Transverse colon (tissue), 4 donors: ENCODE measurements at regions of chr18 and their contacts with region 1.

Region 1: DNA sequence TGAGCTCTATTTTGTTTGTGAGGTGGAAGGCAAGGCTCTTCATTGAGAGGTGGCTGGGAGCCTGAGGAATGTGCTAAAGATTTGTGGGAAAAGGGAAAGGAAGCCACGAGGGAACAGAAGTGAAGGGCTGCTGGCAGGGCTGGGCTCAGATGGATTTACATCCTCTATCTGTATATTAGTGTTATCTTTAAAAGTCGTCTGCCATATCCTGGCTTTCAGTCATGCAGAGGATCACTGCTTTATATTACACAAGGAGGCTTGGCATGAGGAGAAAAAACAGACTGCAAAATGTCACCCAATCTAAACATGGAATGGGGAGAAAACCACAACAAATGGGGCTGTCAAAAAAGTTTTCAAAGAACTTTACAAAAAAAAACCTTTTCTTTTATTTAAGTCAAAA is 434.4 kb downstream of the HRH4 start:
- DNase-seq: no peak
- H3K4me3 ChIP-seq: no peak overlapping the region
- H3K27ac ChIP-seq: no peak overlapping the region
- H3K4me1 ChIP-seq: peaks cover 0 to 5% (median 0%) of the 10 kb centered on the region in 4 donors
- H3K27me3 ChIP-seq: no peaks in the 10 kb centered on the region
- CTCF ChIP-seq: no peak
- EP300 ChIP-seq: no peak
- POLR2A ChIP-seq: no peak

Region 2: DNA sequence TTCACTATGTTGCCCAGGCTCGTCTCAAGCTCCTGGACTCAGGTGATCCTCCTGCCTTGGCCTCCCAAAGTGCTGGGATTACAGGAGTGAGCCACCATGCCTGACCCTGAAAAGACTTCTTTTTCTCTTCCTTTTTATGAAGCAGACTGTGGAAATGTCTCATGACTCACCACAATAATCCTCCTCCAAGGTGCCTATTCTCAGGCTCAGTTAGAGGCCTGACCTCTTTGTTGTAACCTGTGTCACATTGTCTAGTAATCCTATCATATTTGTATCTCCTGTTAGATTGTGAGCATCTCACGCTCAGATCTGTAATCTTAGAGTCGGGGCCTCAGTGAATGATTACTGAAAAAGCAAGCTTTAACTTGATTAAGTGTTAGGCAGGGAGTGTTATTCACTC is 1313.1 kb after region 1 on chr18:
- in situ Hi-C with region 1: no loop called
- intact Hi-C with region 1: loop called (anchors 5 kb)
- DNase-seq: no peak
- H3K4me3 ChIP-seq: no peak overlapping the region
- H3K27ac ChIP-seq: no peak overlapping the region
- H3K4me1 ChIP-seq: no peaks in the 10 kb centered on the region
- H3K27me3 ChIP-seq: no peaks in the 10 kb centered on the region
- CTCF ChIP-seq: no peak
- EP300 ChIP-seq: no peak
- POLR2A ChIP-seq: no peak